ENCODE measurements at regions of chr11 and their contacts with region 1.

Region 1: GRCh38 chr11:58629857-58630256 is 7.4 kb downstream of the CNTF start:
- DNase-seq: no peak
- ATAC-seq: peak; percentile 27 to 38

Region 2: DNA sequence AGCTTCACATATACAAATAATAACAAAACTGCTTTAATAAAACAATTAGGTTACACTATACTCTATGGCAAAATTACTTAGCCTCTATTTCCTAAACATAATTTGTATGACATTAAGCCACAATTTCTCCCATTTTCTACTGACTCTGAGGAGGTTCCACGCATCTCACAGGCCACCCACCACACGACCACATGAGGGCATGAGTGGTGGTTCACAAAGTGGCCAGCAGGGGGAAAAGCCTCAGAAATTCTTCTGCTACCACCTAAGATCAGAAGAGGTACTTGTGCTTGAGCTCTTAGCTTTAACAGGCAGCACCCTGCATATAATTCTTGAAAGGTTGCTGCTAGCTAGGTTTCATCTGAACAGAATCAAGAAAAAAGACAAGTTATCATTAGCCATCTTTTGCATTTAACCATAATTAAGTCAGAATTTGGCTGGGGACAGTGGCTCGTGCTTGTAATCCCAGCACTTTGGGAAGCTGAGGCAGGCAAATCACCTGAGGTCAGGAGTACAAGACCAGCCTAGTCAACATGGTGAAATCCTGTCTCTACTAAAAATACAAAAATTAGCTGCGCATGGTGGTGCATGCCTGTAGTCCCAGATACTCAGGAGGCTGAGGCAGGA is 61.9 kb before region 1 on chr11:
- intact Hi-C with region 1: loop called (anchors 2 to 10 kb)
- DNase-seq: peak; percentile 50
- ATAC-seq: peak; percentile 68 to 69